ENCODE measurements at regions of chr6 and their contacts with region 1.

Region 1: DNA sequence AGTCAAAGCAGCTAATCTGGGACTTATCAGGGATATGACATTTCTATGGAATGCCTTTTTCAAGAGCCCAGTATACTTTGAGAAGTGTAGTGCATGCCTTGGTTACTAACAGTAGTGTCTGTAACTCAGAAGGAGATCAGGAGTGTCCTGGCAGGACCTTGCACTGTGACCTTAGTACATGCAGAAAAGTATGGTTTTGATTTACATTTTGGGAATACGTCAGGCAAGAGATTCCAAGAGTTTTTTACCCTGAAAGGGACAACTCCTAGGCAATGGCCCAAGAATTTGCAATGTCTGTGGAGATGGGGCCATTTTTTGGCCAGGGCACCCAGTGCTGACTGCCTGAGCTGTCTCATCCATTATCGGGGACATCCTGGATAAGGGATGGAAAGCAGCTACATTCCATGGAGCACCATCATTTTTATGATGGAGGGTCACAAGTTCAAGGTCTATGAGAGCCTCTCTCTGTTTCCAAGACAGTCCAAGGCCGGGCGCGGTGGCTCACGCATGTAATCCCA is 80.2 kb downstream of the FAM50B start:
- DNase-seq: no peak
- ATAC-seq: no peak
- H3K4me3 ChIP-seq: no peak overlapping the region
- H3K27ac ChIP-seq: no peak overlapping the region
- H3K4me1 ChIP-seq: peaks cover 0 to 4% of the 10 kb centered on the region in 2 experiments; a peak in 1 of 4 replicates
- H3K27me3 ChIP-seq: no peaks in the 10 kb centered on the region
- CTCF ChIP-seq: no peak
- POLR2A ChIP-seq: no peak
- RAD21 ChIP-seq: no peak

Region 2: DNA sequence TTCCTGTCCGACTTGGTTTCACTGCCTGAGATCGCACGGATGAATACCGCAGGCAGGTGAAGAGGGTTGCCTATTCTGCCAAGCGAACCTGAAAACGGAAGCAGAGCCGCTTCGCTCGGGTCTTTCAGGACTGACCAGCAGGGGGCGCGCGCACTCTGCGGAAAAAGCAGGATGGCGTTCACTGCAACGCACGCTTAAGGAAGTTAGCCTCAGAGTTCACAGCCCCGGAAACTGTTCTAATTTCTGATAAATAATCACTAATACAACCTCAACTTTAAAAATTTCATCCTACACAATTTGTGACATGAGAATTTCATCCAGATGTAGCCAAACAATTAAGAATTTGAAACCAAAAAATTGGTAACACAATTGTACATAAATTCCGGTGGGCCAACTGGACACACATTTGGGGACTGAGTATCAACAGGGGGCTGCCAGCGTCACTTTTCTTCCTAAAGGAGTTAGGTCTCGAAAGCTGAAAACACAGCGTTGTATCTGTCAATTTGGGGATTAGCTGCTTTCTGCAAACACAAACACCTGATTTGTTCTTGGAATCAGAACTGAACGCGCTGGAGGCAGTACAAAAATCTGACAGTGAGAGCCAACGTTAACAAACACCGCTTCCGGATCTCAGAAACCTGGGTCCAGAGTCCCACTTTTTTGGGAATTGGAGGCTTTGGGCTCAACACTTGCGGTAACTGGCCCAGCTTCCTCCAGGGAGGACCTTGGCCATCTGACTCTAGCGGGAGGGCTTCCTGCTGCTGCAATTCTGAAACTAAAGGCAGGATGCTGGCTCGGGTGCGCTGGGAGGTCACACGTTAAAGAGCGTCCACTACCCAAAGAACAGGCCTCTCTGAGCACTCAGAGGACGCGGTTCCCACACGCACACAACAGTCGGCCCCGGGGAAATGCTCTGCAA is 186.7 kb before region 1 on chr6:
- CTCF ChIA-PET with region 1: interaction called, 8 read pairs
- POLR2A ChIA-PET with region 1: interaction called, 3 read pairs
- RAD21 ChIA-PET with region 1: no interaction called
- intact Hi-C with region 1: loop called (anchors 1 kb)
- DNase-seq: peak; percentile 48
- ATAC-seq: peak; percentile 96
- H3K4me3 ChIP-seq: peak overlapping the region in 1 of 2 experiments; percentile 17; a peak in 2 of 4 replicates
- H3K27ac ChIP-seq: no peak overlapping the region
- H3K4me1 ChIP-seq: peaks cover 0 to 13% of the 10 kb centered on the region in 2 experiments; a peak in 2 of 4 replicates
- H3K27me3 ChIP-seq: no peaks in the 10 kb centered on the region
- CTCF ChIP-seq: peak; percentile 86 to 95 (median 91)
- POLR2A ChIP-seq: no peak
- RAD21 ChIP-seq: peak; percentile 98

Region 3: DNA sequence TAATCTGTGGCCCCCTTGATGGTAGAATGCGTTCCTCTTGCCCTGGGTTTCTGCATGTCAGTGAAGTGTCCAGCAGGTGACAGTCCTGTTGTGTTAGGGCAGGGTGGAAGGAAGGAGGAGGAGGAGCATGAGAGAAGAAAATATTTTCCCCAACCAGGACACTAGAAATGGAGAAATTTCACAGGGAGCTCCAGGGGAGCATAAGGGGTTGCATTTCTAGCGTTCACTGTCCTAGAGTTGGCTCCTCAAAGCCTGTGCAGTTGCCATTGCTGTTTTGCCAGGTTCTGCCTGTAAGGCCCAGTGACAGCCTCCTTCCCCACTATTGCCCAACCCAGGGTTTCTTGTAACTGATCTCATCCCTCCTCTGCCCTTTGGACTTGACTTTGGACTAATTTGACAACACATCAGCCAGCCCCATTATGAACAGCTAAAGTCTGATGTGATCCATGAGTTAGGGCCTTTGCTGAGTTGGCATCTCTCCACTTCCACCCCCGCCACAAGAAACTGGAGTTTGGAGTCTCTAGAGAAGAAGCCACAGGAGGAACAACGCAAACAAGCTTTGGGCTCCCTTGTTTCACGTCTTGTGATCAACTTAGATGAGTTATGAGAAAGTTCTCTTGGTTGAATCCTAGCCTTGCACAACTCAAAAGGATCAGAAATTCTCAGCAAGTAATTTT is 94.1 kb before region 1 on chr6:
- CTCF ChIA-PET with region 1: interaction called, 7 read pairs
- POLR2A ChIA-PET with region 1: interaction called, 3 read pairs
- RAD21 ChIA-PET with region 1: interaction called in 1 of 2 experiments, 4 read pairs
- intact Hi-C with region 1: loop called (anchors 1 kb)
- DNase-seq: no peak
- ATAC-seq: peak; percentile 84
- H3K4me3 ChIP-seq: no peak overlapping the region
- H3K27ac ChIP-seq: no peak overlapping the region
- H3K4me1 ChIP-seq: no peaks in the 10 kb centered on the region; a peak in 1 of 4 replicates
- H3K27me3 ChIP-seq: no peaks in the 10 kb centered on the region
- CTCF ChIP-seq: peak; percentile 47 to 60 (median 55)
- POLR2A ChIP-seq: no peak
- RAD21 ChIP-seq: peak; percentile 71

Region 4: GRCh38 chr6:3887150-3887700 is 42.1 kb before region 1 on chr6:
- CTCF ChIA-PET with region 1: interaction called, 5 read pairs
- POLR2A ChIA-PET with region 1: no interaction called
- RAD21 ChIA-PET with region 1: no interaction called
- intact Hi-C with region 1: loop called (anchors 2 kb)
- DNase-seq: no peak
- ATAC-seq: no peak
- H3K4me3 ChIP-seq: no peak overlapping the region
- H3K27ac ChIP-seq: no peak overlapping the region
- H3K4me1 ChIP-seq: 0 out of 4 replicates have a peak, but pooled peaks cover 0 to 5% of the 10 kb centered on the region in 2 experiments
- H3K27me3 ChIP-seq: no peaks in the 10 kb centered on the region
- CTCF ChIP-seq: peak; percentile 26 to 46 (median 39); a peak in 4 of 6 replicates
- POLR2A ChIP-seq: no peak
- RAD21 ChIP-seq: peak; percentile 64

Region 5: DNA sequence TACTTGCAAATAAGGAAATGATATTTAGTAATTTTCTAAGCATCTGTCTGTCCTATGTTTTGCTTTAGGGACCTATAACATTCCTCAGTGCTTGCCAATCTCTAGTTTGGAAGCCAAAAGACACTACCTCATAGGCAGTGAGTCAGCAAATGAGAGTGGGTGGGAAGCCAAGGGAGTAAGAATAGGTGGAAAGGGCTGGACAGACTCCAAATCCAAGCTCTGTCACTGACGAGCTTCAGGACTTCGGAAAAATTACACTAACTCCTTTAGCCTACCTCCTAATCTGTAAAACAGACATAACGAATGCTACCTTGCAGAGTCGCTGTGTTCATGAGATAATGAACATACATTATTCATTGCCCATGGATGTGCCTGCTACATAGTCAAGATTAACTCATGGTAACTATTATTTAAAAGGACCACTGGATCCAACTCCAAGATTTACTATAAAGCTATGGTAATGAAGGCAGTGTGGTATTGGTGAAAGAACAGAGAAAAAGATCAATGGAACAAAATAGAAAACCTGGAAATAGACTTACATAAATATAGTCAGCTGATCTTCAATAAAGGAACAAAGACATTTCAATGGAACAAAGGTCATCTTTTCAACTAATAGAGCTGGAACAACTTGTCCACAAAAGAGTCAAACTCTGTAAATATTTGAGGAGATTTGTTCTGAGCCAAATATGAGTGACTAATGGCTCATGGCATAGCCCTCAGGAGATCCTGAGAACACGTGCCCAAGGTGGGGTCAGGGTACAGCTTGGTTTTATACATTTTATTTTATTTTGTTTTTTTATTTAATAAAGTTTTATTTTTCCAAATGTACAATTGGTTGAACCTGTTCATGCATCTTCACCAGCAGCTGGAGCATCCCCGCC is 16.0 kb before region 1 on chr6:
- CTCF ChIA-PET with region 1: interaction called, 13 read pairs
- POLR2A ChIA-PET with region 1: no interaction called
- RAD21 ChIA-PET with region 1: interaction called in 1 of 2 experiments, 3 read pairs
- intact Hi-C with region 1: no loop called
- DNase-seq: peak; percentile 69
- ATAC-seq: peak; percentile 78
- H3K4me3 ChIP-seq: no peak overlapping the region
- H3K27ac ChIP-seq: no peak overlapping the region; the same call in 1 of the 2 replicates
- H3K4me1 ChIP-seq: peaks cover 32 to 40% of the 10 kb centered on the region in 2 experiments
- H3K27me3 ChIP-seq: no peaks in the 10 kb centered on the region; the same call in 1 of the 2 replicates
- CTCF ChIP-seq: no peak
- POLR2A ChIP-seq: no peak
- RAD21 ChIP-seq: no peak

Measured in HCT116 (cell line).